ENCODE measurements at regions of chr6 and their contacts with region 1.

Region 1: GRCh38 chr6:154733012-154733625 is at the start of gene SCAF8:
- DNase-seq: peak; percentile 79 to 85
- ATAC-seq: peak; percentile 75 to 94 (median 90)
- H3K4me3 ChIP-seq: peak within 1 kb of the TSS; percentile 93 to 99 (median 98)
- H3K27ac ChIP-seq: peak within 1 kb of the TSS; percentile 99 to 100 (median 100)
- H3K4me1 ChIP-seq: peaks cover 5 to 50% (median 46%) of the 10 kb centered on the region in 9 donors
- H3K27me3 ChIP-seq: no peaks in the 10 kb centered on the region
- CTCF ChIP-seq: peak; percentile 69 to 95 (median 86)
- total RNA-seq, gene SCAF8: 43.0 to 96.1 (median 73.6) TPM

Region 2: GRCh38 chr6:154767003-154767723 is 34.0 kb after region 1 on chr6:
- intact Hi-C with region 1: loop called in 1 of 10 experiments (anchors 5 kb)
- DNase-seq: no peak
- ATAC-seq: peak in 4 of 8 donors; percentile 7 to 36 (median 22)
- H3K4me3 ChIP-seq: no peak overlapping the region
- H3K27ac ChIP-seq: peak overlapping the region in 5 of 10 donors; percentile 11 to 66 (median 23)
- H3K4me1 ChIP-seq: peaks cover 0 to 82% (median 69%) of the 10 kb centered on the region in 9 donors
- H3K27me3 ChIP-seq: no peaks in the 10 kb centered on the region
- CTCF ChIP-seq: no peak

Region 3: GRCh38 chr6:154800338-154800737 is 67.2 kb after region 1 on chr6:
- intact Hi-C with region 1: loop called in 9 of 10 experiments (anchors 2 to 10 kb)
- DNase-seq: no peak
- ATAC-seq: no peak
- H3K4me3 ChIP-seq: no peak overlapping the region
- H3K27ac ChIP-seq: no peak overlapping the region
- H3K4me1 ChIP-seq: peaks cover 0 to 7% (median 0%) of the 10 kb centered on the region in 9 donors
- H3K27me3 ChIP-seq: no peaks in the 10 kb centered on the region
- CTCF ChIP-seq: no peak

Region 4: GRCh38 chr6:154805288-154805911 is 72.3 kb after region 1 on chr6:
- intact Hi-C with region 1: loop called in 9 of 10 experiments (anchors 2 to 10 kb)
- DNase-seq: no peak
- ATAC-seq: peak in 2 of 8 donors; percentile 44 to 57
- H3K4me3 ChIP-seq: no peak overlapping the region
- H3K27ac ChIP-seq: no peak overlapping the region
- H3K4me1 ChIP-seq: peaks cover 0 to 7% (median 0%) of the 10 kb centered on the region in 9 donors
- H3K27me3 ChIP-seq: no peaks in the 10 kb centered on the region
- CTCF ChIP-seq: peak in 8 of 9 donors; percentile 22 to 75 (median 58)

Region 5: GRCh38 chr6:154824076-154824475 is 91.0 kb after region 1 on chr6:
- intact Hi-C with region 1: loop called in 1 of 10 experiments (anchors 5 kb)
- DNase-seq: no peak
- ATAC-seq: peak in 2 of 8 donors; percentile 31 to 32
- H3K4me3 ChIP-seq: no peak overlapping the region
- H3K27ac ChIP-seq: peak overlapping the region in 2 of 10 donors; percentile 4 to 50
- H3K4me1 ChIP-seq: peaks cover 3 to 33% (median 23%) of the 10 kb centered on the region in 9 donors
- H3K27me3 ChIP-seq: no peaks in the 10 kb centered on the region
- CTCF ChIP-seq: no peak

Measured in heart right ventricle (tissue), 16 donors.